ENCODE measurements at regions of chr9 and their contacts with region 1.

Region 1: GRCh38 chr9:122810306-122810946 is 10.5 kb downstream of the OR1K1 start:
- DNase-seq: no peak
- H3K4me3 ChIP-seq: no peak overlapping the region
- H3K27ac ChIP-seq: no peak overlapping the region
- H3K4me1 ChIP-seq: peaks cover 7% of the 10 kb centered on the region
- H3K27me3 ChIP-seq: no peaks in the 10 kb centered on the region
- CTCF ChIP-seq: peak; percentile 41 to 95 (median 78)

Region 2: DNA sequence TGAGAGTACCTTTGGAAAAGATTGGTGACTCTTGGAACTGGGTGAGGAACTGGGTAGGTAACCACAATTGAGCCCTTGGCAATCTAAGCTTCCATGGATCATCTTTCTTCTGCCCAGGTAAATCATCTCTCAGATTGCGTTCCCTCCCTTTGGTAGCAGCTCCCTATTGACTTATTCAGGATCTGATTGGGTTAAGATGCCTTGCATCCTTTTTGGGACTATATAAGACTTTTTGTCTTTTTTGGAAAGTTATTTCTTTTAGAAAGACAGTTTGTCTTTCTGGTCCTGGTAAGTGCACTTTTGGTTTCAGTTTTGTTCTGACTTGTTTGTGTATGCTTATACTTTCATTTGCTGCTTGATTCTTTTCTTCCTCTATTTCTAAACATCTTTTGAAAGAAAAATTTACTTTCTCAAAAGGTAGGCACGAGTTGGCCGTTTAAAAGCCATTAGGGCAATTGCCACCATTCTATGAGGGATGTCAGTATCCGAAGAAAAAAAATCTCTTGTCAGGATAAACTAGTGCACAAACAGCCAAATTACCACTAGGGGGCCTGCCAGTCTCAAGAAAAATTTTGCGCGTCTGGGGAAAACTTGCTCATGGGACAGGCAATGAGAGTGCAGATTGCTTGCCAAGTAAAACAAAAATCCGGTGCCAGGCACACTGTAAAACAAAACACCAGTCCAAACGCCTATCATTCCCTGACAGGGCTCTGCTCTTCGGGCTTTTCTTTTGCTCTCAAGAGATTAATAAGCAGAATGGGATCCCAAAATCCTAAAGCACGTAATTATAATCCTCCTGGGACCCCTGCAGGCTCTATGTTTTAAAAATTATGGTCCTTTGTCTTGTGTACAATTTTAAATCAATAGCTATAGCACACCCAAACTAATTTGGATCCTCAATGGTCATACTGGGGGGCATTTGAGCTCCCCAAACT is 345.5 kb before region 1 on chr9:
- dilution Hi-C with region 1: loop called (anchors 25 kb)
- DNase-seq: peak; percentile 26
- H3K4me3 ChIP-seq: peak overlapping the region in 2 of 3 experiments; percentile 59 to 61
- H3K27ac ChIP-seq: no peak overlapping the region
- H3K4me1 ChIP-seq: peaks cover 3% of the 10 kb centered on the region
- H3K27me3 ChIP-seq: no peaks in the 10 kb centered on the region
- CTCF ChIP-seq: peak; percentile 69 to 78 (median 71)